Naive thymus-derived CD4-positive, alpha-beta T cell (primary cell): ENCODE measurements at regions of chrX and their contacts with region 1.

Region 1: DNA sequence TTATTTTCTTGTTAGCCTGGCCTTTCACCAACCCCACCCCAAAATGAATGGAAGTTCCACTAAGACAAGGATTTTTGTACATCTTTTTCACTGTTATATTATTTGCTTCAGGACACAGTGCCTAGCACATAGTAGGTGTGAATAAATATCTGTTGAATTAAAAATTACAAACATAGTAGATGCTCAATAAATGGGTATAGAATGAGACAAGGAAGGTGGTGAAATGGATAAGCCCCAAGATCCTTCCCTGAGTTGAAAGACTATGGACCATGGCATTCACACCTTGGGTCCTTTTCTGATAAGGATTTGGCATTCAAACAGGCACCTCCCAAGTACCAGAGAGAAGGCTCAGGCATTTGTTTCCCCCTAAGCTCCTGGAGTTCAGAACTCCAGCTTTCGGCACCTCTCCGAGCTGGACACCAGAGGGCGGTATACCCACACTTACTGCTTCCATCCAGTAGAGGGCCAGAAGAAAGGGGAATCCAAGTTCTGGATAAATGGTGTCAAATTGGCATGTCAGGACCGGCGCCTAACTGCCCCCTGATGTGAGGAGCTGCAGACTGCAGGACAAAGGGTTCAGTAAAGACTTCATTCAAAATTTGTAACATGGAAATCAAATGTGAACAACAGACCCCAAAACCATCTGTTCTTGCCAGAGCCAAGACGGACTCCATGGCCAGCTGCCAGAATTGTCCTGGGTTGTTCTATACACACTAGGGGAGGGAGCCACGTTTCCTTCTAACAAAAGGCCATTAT is 193.0 kb downstream of the GPC3 start:
- DNase-seq: peak; percentile 22 to 71 (median 54)
- ATAC-seq: peak; percentile 87
- H3K4me3 ChIP-seq: no peak overlapping the region
- H3K4me3 Mint-ChIP-seq: no peak overlapping the region
- H3K27ac ChIP-seq: no peak overlapping the region
- H3K27ac Mint-ChIP-seq: no peak overlapping the region
- H3K4me1 ChIP-seq: no peaks in the 10 kb centered on the region
- H3K4me1 Mint-ChIP-seq: no peaks in the 10 kb centered on the region
- H3K27me3 ChIP-seq: no peaks in the 10 kb centered on the region
- H3K27me3 Mint-ChIP-seq: peaks cover 0 to 3% (median 0%) of the 10 kb centered on the region in 5 donors

Region 2: DNA sequence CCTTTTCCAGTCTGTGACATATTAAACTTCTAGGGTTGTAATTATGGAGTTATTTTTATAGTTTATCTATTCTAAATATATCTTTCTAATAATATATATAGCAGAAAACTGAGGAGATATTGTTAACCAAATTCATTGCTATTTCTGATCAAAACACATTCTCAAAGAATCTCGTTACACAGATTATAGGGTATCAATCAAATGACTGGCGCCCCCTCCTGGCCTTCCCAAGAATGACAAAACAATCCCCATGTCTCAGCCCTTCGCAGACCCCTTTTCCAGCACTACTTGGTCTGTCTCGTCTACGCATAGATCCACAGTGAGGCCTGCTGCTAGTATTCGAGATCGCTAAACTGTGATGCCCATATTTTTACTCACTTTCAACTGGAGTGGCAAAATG is 16.3 kb before region 1 on chrX:
- CTCF ChIA-PET with region 1: interaction called, 10 read pairs
- POLR2A ChIA-PET with region 1: no interaction called
- intact Hi-C with region 1: no loop called
- DNase-seq: peak in 8 of 9 donors; percentile 14 to 60 (median 47)
- ATAC-seq: peak; percentile 55
- H3K4me3 ChIP-seq: no peak overlapping the region
- H3K4me3 Mint-ChIP-seq: no peak overlapping the region
- H3K27ac ChIP-seq: no peak overlapping the region
- H3K27ac Mint-ChIP-seq: peak overlapping the region in 1 of 9 donors; percentile 25
- H3K4me1 ChIP-seq: no peaks in the 10 kb centered on the region
- H3K4me1 Mint-ChIP-seq: peaks cover 0 to 5% (median 0%) of the 10 kb centered on the region in 7 donors
- H3K27me3 ChIP-seq: no peaks in the 10 kb centered on the region
- H3K27me3 Mint-ChIP-seq: no peaks in the 10 kb centered on the region

Region 3: GRCh38 chrX:133859860-133860259 is 67.5 kb after region 1 on chrX:
- CTCF ChIA-PET with region 1: no interaction called
- POLR2A ChIA-PET with region 1: no interaction called
- intact Hi-C with region 1: no loop called
- DNase-seq: no peak
- ATAC-seq: no peak
- H3K4me3 ChIP-seq: no peak overlapping the region
- H3K4me3 Mint-ChIP-seq: no peak overlapping the region
- H3K27ac ChIP-seq: no peak overlapping the region
- H3K27ac Mint-ChIP-seq: no peak overlapping the region
- H3K4me1 ChIP-seq: no peaks in the 10 kb centered on the region
- H3K4me1 Mint-ChIP-seq: no peaks in the 10 kb centered on the region
- H3K27me3 ChIP-seq: no peaks in the 10 kb centered on the region
- H3K27me3 Mint-ChIP-seq: peaks cover 0 to 4% (median 0%) of the 10 kb centered on the region in 5 donors

Region 4: DNA sequence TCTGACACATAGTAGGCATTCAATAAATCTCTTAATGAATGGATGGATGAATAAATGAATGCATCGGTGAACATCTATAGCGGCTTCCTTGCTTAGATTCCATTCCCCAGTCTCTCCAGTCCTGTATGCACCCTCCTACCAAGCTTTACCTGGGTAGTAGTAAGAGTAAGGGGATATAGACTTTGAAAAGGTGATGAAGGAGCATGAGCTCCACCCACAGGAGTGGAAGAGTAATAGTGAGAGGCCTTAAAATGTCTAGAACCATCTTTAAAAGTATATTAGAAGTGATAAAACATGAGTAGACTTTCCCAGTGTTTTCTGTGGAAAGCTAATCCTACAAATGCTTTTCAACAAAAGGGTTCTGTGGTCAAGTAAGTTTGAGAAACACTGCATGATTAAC is 228.5 kb after region 1 on chrX:
- CTCF ChIA-PET with region 1: interaction called, 20 read pairs
- POLR2A ChIA-PET with region 1: no interaction called
- intact Hi-C with region 1: loop called (anchors 1 kb)
- DNase-seq: no peak
- ATAC-seq: no peak
- H3K4me3 ChIP-seq: no peak overlapping the region
- H3K4me3 Mint-ChIP-seq: no peak overlapping the region
- H3K27ac ChIP-seq: no peak overlapping the region
- H3K27ac Mint-ChIP-seq: no peak overlapping the region
- H3K4me1 ChIP-seq: no peaks in the 10 kb centered on the region
- H3K4me1 Mint-ChIP-seq: peaks cover 0 to 13% (median 2%) of the 10 kb centered on the region in 7 donors
- H3K27me3 ChIP-seq: no peaks in the 10 kb centered on the region
- H3K27me3 Mint-ChIP-seq: peaks cover 0 to 4% (median 0%) of the 10 kb centered on the region in 5 donors

Region 5: GRCh38 chrX:134144231-134144630 is 351.9 kb after region 1 on chrX:
- CTCF ChIA-PET with region 1: no interaction called
- POLR2A ChIA-PET with region 1: no interaction called
- intact Hi-C with region 1: loop called (anchors 1 kb)
- DNase-seq: peak in 2 of 9 donors; percentile 3 to 15
- ATAC-seq: peak; percentile 37
- H3K4me3 ChIP-seq: no peak overlapping the region
- H3K4me3 Mint-ChIP-seq: no peak overlapping the region
- H3K27ac ChIP-seq: no peak overlapping the region
- H3K27ac Mint-ChIP-seq: peak overlapping the region in 2 of 9 donors; percentile 2 to 50
- H3K4me1 ChIP-seq: no peaks in the 10 kb centered on the region
- H3K4me1 Mint-ChIP-seq: peaks cover 0 to 5% (median 0%) of the 10 kb centered on the region in 7 donors
- H3K27me3 ChIP-seq: no peaks in the 10 kb centered on the region
- H3K27me3 Mint-ChIP-seq: peaks cover 0 to 7% (median 0%) of the 10 kb centered on the region in 5 donors

Region 6: DNA sequence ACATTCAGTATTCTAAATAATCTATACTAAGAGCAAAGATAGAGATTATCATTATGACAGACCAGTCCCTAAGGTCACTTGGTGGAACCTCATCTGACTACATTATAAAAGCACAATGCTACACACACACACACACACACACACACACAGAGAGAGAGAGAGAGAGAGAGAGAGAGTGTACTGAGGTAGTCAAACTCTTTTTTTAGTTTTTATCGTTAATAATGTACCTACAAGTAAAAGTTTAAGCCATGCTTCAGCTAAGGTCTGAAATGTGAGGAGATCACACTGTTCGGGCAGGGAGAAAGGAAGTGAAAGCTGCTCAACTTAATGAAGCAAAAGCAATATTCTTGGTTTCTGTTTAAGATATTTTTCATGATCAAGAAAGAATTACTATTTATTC is 368.8 kb after region 1 on chrX:
- CTCF ChIA-PET with region 1: no interaction called
- POLR2A ChIA-PET with region 1: no interaction called
- intact Hi-C with region 1: no loop called
- DNase-seq: no peak
- ATAC-seq: no peak
- H3K4me3 ChIP-seq: no peak overlapping the region
- H3K4me3 Mint-ChIP-seq: peak overlapping the region in 2 of 10 donors; percentile 29 to 51
- H3K27ac ChIP-seq: no peak overlapping the region
- H3K27ac Mint-ChIP-seq: peak overlapping the region in 1 of 9 donors; percentile 64
- H3K4me1 ChIP-seq: no peaks in the 10 kb centered on the region
- H3K4me1 Mint-ChIP-seq: peaks cover 0 to 21% (median 0%) of the 10 kb centered on the region in 7 donors
- H3K27me3 ChIP-seq: no peaks in the 10 kb centered on the region
- H3K27me3 Mint-ChIP-seq: no peaks in the 10 kb centered on the region

Region 7: DNA sequence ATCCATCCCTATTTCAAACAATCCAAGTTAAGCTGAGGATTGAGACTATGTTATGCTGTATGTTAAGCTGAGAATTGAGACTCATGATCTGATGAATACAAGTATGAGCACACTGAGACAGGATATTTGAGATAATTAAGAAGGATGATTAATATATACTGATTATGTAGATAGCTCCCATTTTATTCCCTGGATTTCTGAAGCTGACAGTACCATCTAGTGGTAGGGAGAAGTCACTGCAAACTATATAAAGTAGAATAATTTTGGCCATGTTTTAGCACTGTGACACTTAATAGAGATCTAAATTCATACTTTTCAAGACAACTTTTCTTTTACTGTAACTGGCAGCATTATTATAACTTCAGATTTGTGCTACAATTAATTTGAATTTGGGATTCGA is 603.8 kb after region 1 on chrX:
- CTCF ChIA-PET with region 1: interaction called, 9 read pairs
- POLR2A ChIA-PET with region 1: no interaction called
- intact Hi-C with region 1: loop called (anchors 1 to 2 kb)
- DNase-seq: peak in 2 of 9 donors; percentile 1 to 18
- ATAC-seq: no peak
- H3K4me3 ChIP-seq: no peak overlapping the region
- H3K4me3 Mint-ChIP-seq: no peak overlapping the region
- H3K27ac ChIP-seq: no peak overlapping the region
- H3K27ac Mint-ChIP-seq: no peak overlapping the region
- H3K4me1 ChIP-seq: no peaks in the 10 kb centered on the region
- H3K4me1 Mint-ChIP-seq: peaks cover 0 to 15% (median 5%) of the 10 kb centered on the region in 7 donors
- H3K27me3 ChIP-seq: no peaks in the 10 kb centered on the region
- H3K27me3 Mint-ChIP-seq: no peaks in the 10 kb centered on the region

Region 8: DNA sequence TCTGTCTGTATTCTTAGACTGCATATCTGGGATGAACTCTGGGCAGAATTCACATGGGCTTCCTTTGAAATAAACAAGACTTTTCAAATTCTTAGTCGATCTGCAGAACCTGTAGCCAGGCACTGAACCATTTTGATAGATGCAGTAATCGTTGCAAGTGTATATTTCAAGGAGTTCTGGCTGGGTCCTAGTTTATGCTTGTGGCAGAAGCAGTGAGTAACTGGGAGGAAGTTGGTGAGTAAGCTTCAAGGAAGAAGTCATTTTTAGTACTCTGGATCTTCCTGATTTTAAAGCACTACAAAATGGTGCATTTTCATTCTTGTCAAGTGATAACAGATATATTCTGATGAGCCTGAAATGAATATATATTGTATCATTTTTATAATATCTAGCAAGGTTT is 677.1 kb after region 1 on chrX:
- CTCF ChIA-PET with region 1: no interaction called
- POLR2A ChIA-PET with region 1: no interaction called
- intact Hi-C with region 1: no loop called
- DNase-seq: no peak
- ATAC-seq: peak; percentile 40
- H3K4me3 ChIP-seq: no peak overlapping the region
- H3K4me3 Mint-ChIP-seq: no peak overlapping the region
- H3K27ac ChIP-seq: no peak overlapping the region
- H3K27ac Mint-ChIP-seq: no peak overlapping the region
- H3K4me1 ChIP-seq: no peaks in the 10 kb centered on the region
- H3K4me1 Mint-ChIP-seq: peaks cover 0 to 6% (median 0%) of the 10 kb centered on the region in 7 donors
- H3K27me3 ChIP-seq: no peaks in the 10 kb centered on the region
- H3K27me3 Mint-ChIP-seq: no peaks in the 10 kb centered on the region